ENCODE measurements at regions of chr14 and their contacts with region 1.

Region 1: GRCh38 chr14:73553845-73554244 is 4.9 kb downstream of the HEATR4 start:
- DNase-seq: no peak
- H3K4me3 Mint-ChIP-seq: no peak overlapping the region
- H3K27ac Mint-ChIP-seq: no peak overlapping the region
- H3K4me1 Mint-ChIP-seq: no peaks in the 10 kb centered on the region
- H3K27me3 Mint-ChIP-seq: no peaks in the 10 kb centered on the region

Region 2: DNA sequence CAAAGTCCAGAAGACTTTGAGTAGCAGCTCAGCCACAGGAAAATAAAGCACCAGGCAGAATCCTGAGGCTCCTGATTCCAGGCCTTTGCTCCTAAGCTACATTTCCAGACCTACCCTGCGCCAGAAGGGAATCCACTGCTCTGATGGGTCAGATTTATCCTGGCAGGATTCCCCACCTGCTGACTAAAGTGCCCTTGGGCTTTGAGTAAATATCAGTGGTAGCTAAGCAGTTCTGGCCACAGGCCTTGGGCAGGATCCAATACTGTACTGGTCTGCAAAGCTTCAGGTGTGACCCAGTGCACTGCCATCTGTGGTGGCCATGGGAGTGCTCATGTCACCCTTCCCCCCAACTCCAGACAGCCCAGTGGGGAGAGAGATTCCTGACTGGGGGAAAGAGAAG is 27.3 kb before region 1 on chr14:
- intact Hi-C with region 1: loop called (anchors 2 kb)
- DNase-seq: no peak
- H3K4me3 Mint-ChIP-seq: no peak overlapping the region
- H3K27ac Mint-ChIP-seq: no peak overlapping the region
- H3K4me1 Mint-ChIP-seq: no peaks in the 10 kb centered on the region
- H3K27me3 Mint-ChIP-seq: no peaks in the 10 kb centered on the region